Heart left ventricle (tissue), 16 donors: ENCODE measurements at regions of chr16 and their contacts with region 1.

Region 1: DNA sequence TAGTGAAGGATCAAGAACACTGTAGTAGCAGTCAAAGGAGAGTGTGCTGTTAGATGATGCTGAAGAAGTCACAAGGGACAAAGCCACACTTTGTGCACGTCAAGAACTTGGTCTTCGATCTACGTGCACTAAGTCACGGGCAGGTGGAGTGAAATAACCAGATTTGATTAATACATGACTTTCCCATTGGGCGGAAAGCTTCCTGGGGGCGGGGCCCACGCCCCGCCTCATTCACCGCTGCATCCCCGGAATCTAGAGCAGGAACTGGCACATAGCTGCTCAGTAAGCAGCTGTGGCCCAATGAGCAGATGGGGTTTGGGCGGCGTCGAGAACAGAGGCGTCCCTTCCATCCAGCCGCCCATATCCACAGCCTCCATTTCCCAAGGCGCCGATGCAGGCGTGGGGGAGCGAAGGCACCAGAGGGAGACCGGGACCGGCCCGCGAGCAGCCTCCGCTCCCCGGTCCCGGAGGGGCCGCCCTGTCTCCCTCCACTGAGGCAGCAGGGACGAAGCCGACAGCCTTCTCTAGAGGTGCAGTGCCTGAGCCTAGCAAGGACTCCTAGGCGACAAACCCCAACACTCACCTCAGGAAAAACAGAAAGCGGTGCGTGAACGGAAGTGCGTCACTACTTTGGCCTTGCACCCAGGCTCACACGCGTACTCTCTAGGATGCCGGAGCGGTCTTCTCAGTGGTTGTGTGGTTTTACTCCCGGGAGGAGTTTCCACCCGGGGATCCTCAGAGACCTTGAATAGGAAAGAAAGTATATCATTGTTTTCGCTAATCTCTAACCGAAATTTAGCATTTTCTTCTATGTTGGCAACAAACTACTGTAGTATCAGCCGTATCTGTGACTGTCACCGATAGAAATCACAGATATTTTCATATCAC is 4.9 kb downstream of the ZNF19 start:
- DNase-seq: peak; percentile 85 to 93 (median 88)
- ATAC-seq: peak; percentile 91 to 99 (median 98)
- H3K4me3 ChIP-seq: peak overlapping the region; percentile 53 to 99 (median 86)
- H3K27ac ChIP-seq: peak overlapping the region; percentile 84 to 99 (median 95)
- H3K4me1 ChIP-seq: peaks cover 0 to 13% (median 6%) of the 10 kb centered on the region in 12 donors
- H3K27me3 ChIP-seq: no peaks in the 10 kb centered on the region
- CTCF ChIP-seq: no peak
- POLR2A ChIP-seq: peak in 1 of 2 donors; percentile 59

Region 2: DNA sequence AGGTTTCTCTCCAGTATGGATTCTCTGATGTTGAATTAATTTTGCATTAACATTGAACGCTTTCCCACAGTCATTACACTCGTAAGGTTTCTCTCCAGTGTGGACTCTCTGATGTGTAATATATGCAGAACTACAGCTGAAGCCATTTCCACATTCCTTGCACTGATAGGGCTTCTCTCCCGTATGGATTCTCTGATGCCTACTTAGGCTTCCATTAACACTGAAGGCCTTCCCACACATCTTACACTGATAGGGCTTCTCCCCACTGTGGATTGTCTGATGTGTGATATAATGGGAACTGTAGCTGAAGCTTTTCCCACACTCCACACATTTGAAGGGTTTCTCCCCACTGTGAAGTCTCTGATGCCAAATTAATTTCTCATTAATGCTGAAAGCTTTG is 35.2 kb before region 1 on chr16:
- intact Hi-C with region 1: loop called in 2 of 10 experiments (anchors 5 kb)
- DNase-seq: no peak
- ATAC-seq: no peak
- H3K4me3 ChIP-seq: no peak overlapping the region
- H3K27ac ChIP-seq: no peak overlapping the region
- H3K4me1 ChIP-seq: no peaks in the 10 kb centered on the region
- H3K27me3 ChIP-seq: no peaks in the 10 kb centered on the region
- CTCF ChIP-seq: no peak
- POLR2A ChIP-seq: no peak

Region 3: DNA sequence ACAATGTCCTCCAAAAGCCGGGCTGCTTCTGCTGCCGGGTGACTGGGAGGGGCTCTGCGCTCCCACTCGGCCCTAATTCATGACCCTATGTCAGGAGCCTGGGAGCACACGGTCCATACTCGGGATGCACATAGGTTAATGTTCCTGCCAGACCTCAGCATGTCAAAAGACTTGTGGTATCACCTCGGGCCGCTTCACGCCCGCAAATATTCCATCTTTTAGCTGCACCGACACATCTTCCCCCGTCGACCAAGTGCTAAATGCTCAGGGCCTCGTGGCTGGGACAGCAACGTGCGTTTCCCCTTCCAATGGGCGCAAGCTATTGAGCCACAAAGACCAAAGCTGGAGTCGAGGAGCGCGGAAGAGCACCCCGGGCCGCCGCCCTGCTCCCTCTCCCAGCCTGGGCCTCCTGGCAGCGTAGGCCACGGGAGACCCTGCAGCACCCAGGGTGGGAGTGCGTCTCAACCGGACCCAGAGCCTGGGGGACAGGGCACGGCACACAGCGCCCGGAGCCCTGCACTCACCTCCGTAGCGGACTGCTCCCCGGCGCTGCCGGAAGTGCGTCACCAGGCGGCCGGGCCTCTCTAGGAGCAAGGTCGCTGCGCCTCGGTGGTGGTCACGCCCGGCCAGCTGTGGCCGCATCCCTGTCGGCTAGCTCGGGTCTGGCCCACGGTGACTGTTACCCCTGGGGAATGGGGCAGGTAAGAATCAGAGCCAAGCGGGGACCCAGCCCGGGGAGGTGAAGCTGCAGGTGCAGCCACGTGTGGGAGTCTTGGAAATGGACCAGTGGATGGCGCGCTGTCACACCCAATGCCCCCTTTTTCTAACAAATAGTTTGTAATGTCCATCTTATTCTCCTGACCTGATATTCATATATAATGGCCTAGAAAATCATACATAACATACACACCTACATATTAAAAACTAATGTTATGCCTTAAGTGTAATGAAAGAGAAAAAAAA is 22.3 kb before region 1 on chr16 and contains the start of gene ZNF23:
- intact Hi-C with region 1: loop called (anchors 1 to 2 kb)
- DNase-seq: peak; percentile 88 to 95 (median 88)
- ATAC-seq: peak; percentile 98 to 100 (median 99)
- H3K4me3 ChIP-seq: peak within 1 kb of the TSS; percentile 60 to 99 (median 90)
- H3K27ac ChIP-seq: peak within 1 kb of the TSS; percentile 14 to 94 (median 88)
- H3K4me1 ChIP-seq: peaks cover 0 to 23% (median 12%) of the 10 kb centered on the region in 12 donors
- H3K27me3 ChIP-seq: no peaks in the 10 kb centered on the region
- CTCF ChIP-seq: peak in 3 of 12 donors; percentile 8 to 24 (median 23)
- POLR2A ChIP-seq: peak in 1 of 2 donors; percentile 75
- total RNA-seq, gene ZNF23: 2.7 to 7.4 (median 5.3) TPM

Region 4: GRCh38 chr16:71746442-71747046 is 262.3 kb after region 1 on chr16:
- intact Hi-C with region 1: loop called in 1 of 10 experiments (anchors 10 kb)
- DNase-seq: no peak
- ATAC-seq: no peak
- H3K4me3 ChIP-seq: no peak overlapping the region
- H3K27ac ChIP-seq: no peak overlapping the region
- H3K4me1 ChIP-seq: peaks cover 0 to 5% (median 0%) of the 10 kb centered on the region in 12 donors
- H3K27me3 ChIP-seq: no peaks in the 10 kb centered on the region
- CTCF ChIP-seq: peak; percentile 55 to 81 (median 66)
- POLR2A ChIP-seq: no peak